CD14-positive monocyte (primary cell): ENCODE measurements at regions of chr6 and their contacts with region 1.

Region 1: GRCh38 chr6:144215932-144216667 is 65.8 kb downstream of the STX11 start:
- DNase-seq: peak; percentile 92 to 94 (median 94)
- H3K4me3 ChIP-seq: peak overlapping the region; percentile 63 to 97 (median 70)
- H3K4me3 Mint-ChIP-seq: peak overlapping the region; percentile 91 to 92
- H3K27ac ChIP-seq: peak overlapping the region; percentile 77 to 93
- H3K27ac Mint-ChIP-seq: peak overlapping the region; percentile 94 to 97 (median 97)
- H3K4me1 ChIP-seq: peaks cover 24 to 30% of the 10 kb centered on the region in 2 donors
- H3K4me1 Mint-ChIP-seq: peaks cover 26% of the 10 kb centered on the region
- H3K27me3 ChIP-seq: no peaks in the 10 kb centered on the region
- H3K27me3 Mint-ChIP-seq: peaks cover 0 to 3% (median 1%) of the 10 kb centered on the region in 3 donors
- CTCF ChIP-seq: peak; percentile 45

Region 2: DNA sequence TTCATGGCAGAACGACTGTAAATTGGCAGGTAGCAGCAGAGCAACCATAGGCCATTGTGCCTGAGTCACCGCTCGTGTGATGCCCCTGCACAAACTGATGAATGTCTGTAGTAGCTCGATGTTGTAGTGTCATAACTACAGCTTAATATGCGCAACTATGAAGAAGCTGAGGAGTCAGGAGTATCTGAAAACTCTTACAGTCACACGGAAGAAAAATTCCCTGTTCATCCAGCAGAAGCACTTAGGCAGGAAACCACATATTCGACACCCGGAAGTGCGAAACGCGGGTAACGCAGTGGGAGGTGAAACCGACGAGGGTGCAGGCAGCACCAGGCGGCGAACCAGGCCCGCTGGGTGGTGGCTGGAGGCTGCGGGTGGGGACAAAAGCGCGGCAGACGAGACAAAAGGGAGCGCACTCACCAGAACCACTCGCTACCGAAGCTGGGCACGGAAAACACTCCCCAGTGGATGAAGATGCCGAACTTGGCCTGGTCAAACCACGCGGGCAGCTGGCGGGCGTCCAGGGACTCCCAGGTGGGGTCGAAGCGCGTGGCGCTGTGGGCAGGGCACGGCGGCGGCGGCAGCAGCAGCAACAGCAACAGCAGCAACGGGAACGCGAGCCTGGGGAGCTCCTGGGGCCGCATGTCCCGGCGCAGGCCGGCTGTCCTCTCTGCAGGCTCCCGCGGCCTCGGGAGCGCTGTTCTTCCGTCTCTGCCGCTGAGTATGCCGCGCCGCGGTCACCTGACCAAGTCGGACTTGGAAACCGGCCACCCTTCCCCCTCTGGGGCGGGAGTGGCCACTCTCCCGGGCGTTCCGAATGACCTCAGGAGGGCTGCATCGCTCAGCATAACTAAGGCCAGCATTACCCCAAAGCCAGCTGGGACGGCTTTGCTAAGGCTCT is 704.9 kb before region 1 on chr6 and contains the start of gene FUCA2:
- intact Hi-C with region 1: no loop called
- DNase-seq: peak; percentile 68 to 85 (median 69)
- H3K4me3 ChIP-seq: peak within 1 kb of the TSS; percentile 73 to 90 (median 74)
- H3K4me3 Mint-ChIP-seq: peak within 1 kb of the TSS; percentile 87 to 95
- H3K27ac ChIP-seq: peak within 1 kb of the TSS; percentile 80 to 93
- H3K27ac Mint-ChIP-seq: peak within 1 kb of the TSS; percentile 82 to 91 (median 86)
- H3K4me1 ChIP-seq: peaks cover 21 to 30% of the 10 kb centered on the region in 2 donors
- H3K4me1 Mint-ChIP-seq: peaks cover 39% of the 10 kb centered on the region
- H3K27me3 ChIP-seq: no peaks in the 10 kb centered on the region
- H3K27me3 Mint-ChIP-seq: peaks cover 0 to 2% (median 0%) of the 10 kb centered on the region in 3 donors
- CTCF ChIP-seq: no peak
- polyA plus RNA-seq, gene FUCA2: 35.7 to 93.5 (median 83.7) TPM

Region 3: DNA sequence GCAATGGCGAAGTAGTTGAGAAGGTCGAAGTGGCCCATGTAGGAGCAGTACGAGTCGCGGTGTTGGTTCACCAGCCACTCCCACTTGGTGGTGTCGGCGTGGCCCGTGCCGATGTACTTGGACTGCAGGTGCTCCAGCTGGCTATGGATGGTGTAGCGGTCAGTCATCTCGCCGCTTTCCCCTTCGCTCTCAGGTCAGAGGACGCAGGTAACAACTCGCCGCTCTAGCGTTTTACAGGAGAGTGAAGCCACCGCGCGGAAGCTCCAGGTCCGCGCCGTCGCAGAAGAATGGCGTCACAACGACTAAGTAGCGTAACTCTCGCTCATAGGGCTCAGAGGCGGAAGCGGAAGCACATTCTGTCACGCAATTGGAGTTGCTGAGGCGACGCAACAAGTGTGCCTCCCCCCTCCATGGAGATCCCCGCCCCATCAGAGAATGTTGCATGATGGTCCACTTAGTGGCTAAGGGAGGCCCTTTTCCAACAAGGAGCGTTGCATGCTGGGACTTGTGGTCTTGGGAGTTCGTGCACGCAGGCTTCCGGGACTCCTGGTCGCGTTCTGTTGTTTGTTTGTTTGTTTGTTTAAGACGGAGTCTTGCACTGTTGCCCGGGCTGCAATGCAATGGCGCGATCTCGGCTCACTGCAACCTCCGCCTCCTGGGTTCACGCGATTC is 120.6 kb before region 1 on chr6 and contains the start of gene SF3B5:
- intact Hi-C with region 1: loop called in 1 of 2 experiments (anchors 5 kb)
- DNase-seq: peak; percentile 100
- H3K4me3 ChIP-seq: peak within 1 kb of the TSS; percentile 73 to 84 (median 82)
- H3K4me3 Mint-ChIP-seq: peak within 1 kb of the TSS; percentile 95 to 97
- H3K27ac ChIP-seq: peak within 1 kb of the TSS; percentile 87 to 94
- H3K27ac Mint-ChIP-seq: peak within 1 kb of the TSS; percentile 96 to 99 (median 97)
- H3K4me1 ChIP-seq: peaks cover 17 to 24% of the 10 kb centered on the region in 2 donors
- H3K4me1 Mint-ChIP-seq: peaks cover 21% of the 10 kb centered on the region
- H3K27me3 ChIP-seq: no peaks in the 10 kb centered on the region
- H3K27me3 Mint-ChIP-seq: peaks cover 0 to 2% (median 2%) of the 10 kb centered on the region in 3 donors
- CTCF ChIP-seq: no peak
- polyA plus RNA-seq, gene SF3B5: 271 to 445 (median 355) TPM

Region 4: GRCh38 chr6:144104898-144105487 is 111.1 kb before region 1 on chr6:
- intact Hi-C with region 1: loop called in 1 of 2 experiments (anchors 5 kb)
- DNase-seq: peak; percentile 65 to 77 (median 71)
- H3K4me3 ChIP-seq: no peak overlapping the region
- H3K4me3 Mint-ChIP-seq: no peak overlapping the region
- H3K27ac ChIP-seq: no peak overlapping the region
- H3K27ac Mint-ChIP-seq: no peak overlapping the region
- H3K4me1 ChIP-seq: no peaks in the 10 kb centered on the region
- H3K4me1 Mint-ChIP-seq: peaks cover 3% of the 10 kb centered on the region
- H3K27me3 ChIP-seq: no peaks in the 10 kb centered on the region
- H3K27me3 Mint-ChIP-seq: peaks cover 0 to 2% (median 0%) of the 10 kb centered on the region in 3 donors
- CTCF ChIP-seq: peak; percentile 72

Region 5: DNA sequence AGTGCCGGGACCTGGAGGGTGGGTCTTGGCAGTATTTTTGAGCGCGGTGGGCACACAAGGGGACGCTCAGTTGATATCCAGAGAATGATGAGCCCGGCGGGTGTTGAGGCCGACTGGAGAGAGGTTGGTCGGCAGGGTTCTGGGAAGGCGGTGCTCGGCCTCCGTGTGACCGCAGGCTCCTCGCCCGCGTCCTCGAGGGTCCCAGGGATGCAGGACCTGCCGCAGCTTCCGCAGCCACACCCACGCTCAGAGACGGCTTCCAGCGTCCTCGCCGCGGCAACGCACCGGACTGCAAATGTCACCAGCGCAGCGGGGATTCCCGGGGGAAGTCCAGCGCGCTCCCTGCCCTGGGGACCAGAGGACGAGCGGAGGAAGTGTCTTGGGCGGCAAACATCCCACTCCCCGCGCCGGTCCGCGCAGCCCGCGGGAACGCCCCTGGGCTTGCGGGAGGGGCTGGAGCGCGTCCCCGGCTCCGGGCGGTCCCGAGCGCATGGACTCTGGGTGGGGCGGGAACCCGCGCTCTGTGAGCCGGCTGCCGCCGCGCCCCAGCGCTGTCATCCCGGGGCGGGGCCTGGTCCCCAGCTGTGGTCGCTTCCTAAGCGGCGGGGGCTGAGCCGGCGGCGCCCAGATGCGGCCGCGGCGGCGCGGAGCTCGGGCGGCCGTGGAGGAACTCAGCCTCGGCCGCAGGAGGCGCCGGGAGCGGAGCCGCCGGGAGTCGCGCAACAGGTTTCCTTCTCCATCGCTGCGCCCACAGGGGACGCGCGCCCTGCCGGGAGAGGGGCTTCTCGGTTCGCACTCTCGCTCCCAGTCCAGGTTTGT is 66.0 kb before region 1 on chr6 and contains the start of gene STX11:
- intact Hi-C with region 1: loop called (anchors 5 kb)
- DNase-seq: peak; percentile 91 to 99 (median 95)
- H3K4me3 ChIP-seq: peak within 1 kb of the TSS; percentile 88 to 99 (median 90)
- H3K4me3 Mint-ChIP-seq: peak within 1 kb of the TSS; percentile 95 to 97
- H3K27ac ChIP-seq: peak within 1 kb of the TSS; percentile 96 to 99
- H3K27ac Mint-ChIP-seq: peak within 1 kb of the TSS; percentile 99 to 100 (median 99)
- H3K4me1 ChIP-seq: peaks cover 43 to 44% of the 10 kb centered on the region in 2 donors
- H3K4me1 Mint-ChIP-seq: peaks cover 47% of the 10 kb centered on the region
- H3K27me3 ChIP-seq: no peaks in the 10 kb centered on the region
- H3K27me3 Mint-ChIP-seq: peaks cover 0 to 3% (median 1%) of the 10 kb centered on the region in 3 donors
- CTCF ChIP-seq: no peak
- polyA plus RNA-seq, gene STX11: 276 to 372 (median 367) TPM

Region 6: GRCh38 chr6:144158133-144158532 is 58.0 kb before region 1 on chr6:
- intact Hi-C with region 1: loop called (anchors 5 kb)
- DNase-seq: no peak
- H3K4me3 ChIP-seq: peak overlapping the region in 1 of 3 experiments; percentile 90
- H3K4me3 Mint-ChIP-seq: peak overlapping the region; percentile 56 to 67
- H3K27ac ChIP-seq: peak overlapping the region; percentile 23 to 96
- H3K27ac Mint-ChIP-seq: peak overlapping the region; percentile 75 to 99 (median 97)
- H3K4me1 ChIP-seq: peaks cover 98 to 100% of the 10 kb centered on the region in 2 donors
- H3K4me1 Mint-ChIP-seq: peaks cover 97% of the 10 kb centered on the region
- H3K27me3 ChIP-seq: no peaks in the 10 kb centered on the region
- H3K27me3 Mint-ChIP-seq: no peaks in the 10 kb centered on the region
- CTCF ChIP-seq: no peak

Region 7: GRCh38 chr6:144171406-144171805 is 44.7 kb before region 1 on chr6:
- intact Hi-C with region 1: loop called in 1 of 2 experiments (anchors 5 kb)
- DNase-seq: no peak
- H3K4me3 ChIP-seq: no peak overlapping the region
- H3K4me3 Mint-ChIP-seq: no peak overlapping the region
- H3K27ac ChIP-seq: no peak overlapping the region
- H3K27ac Mint-ChIP-seq: no peak overlapping the region
- H3K4me1 ChIP-seq: peaks cover 39 to 67% of the 10 kb centered on the region in 2 donors
- H3K4me1 Mint-ChIP-seq: peaks cover 66% of the 10 kb centered on the region
- H3K27me3 ChIP-seq: no peaks in the 10 kb centered on the region
- H3K27me3 Mint-ChIP-seq: peaks cover 0 to under 1% (median 0%) of the 10 kb centered on the region in 3 donors
- CTCF ChIP-seq: no peak

Region 8: DNA sequence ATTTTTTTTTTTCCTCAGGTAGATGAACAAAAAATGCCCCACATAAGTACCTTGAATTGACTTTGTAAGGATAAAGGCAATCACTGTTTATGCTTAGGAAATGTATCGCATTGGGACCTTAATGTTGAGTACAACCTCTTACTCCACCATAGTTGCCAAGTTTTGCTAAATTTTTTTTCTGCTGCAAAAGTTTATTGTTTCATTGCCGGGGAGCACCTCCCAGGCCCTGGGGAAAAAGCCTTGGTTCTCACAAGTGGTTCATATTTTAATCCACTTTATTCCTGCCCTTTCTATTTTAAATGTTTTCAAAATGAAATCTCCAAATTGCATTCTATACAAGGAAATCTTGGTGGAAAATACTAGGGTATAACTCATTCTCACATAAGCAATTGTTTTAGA is 16.7 kb after region 1 on chr6:
- intact Hi-C with region 1: no loop called
- DNase-seq: no peak
- H3K4me3 ChIP-seq: no peak overlapping the region
- H3K4me3 Mint-ChIP-seq: no peak overlapping the region
- H3K27ac ChIP-seq: no peak overlapping the region
- H3K27ac Mint-ChIP-seq: no peak overlapping the region
- H3K4me1 ChIP-seq: no peaks in the 10 kb centered on the region
- H3K4me1 Mint-ChIP-seq: no peaks in the 10 kb centered on the region
- H3K27me3 ChIP-seq: no peaks in the 10 kb centered on the region
- H3K27me3 Mint-ChIP-seq: peaks cover 0 to 1% (median 0%) of the 10 kb centered on the region in 3 donors
- CTCF ChIP-seq: no peak

Region 9: DNA sequence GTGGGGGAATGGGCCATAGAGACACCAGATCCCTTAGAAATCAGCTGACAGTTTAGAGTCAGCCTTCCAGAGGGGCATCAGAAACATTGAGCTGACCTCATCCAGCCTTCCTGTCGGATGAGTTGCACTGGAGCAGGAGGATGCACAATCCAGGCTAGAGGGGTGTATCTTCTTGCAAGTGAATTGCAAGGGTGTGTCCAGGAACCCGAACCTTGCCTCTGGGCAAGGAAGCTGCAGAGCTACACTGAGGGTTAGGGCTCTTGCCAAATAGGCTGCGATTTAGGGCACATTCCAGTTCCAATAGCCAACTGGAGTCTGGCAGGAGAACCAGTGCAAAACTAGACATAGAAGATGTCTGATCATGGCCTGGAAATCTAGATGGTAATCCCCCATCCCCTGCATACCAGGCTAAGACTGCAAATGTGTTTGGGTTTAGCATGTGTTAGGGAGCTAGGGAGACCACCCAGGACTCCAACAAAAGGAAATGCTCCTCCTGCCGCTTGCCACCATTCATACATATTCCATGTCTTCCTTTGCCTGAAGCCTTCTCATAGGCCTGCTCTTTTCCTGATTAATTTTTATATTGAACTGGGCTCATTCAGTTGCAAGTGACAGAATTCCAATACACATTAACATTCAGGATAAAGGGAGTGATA is 62.7 kb after region 1 on chr6:
- intact Hi-C with region 1: loop called in 1 of 2 experiments (anchors 10 kb)
- DNase-seq: no peak
- H3K4me3 ChIP-seq: no peak overlapping the region
- H3K4me3 Mint-ChIP-seq: no peak overlapping the region
- H3K27ac ChIP-seq: no peak overlapping the region
- H3K27ac Mint-ChIP-seq: no peak overlapping the region
- H3K4me1 ChIP-seq: peaks cover 3 to 6% of the 10 kb centered on the region in 2 donors
- H3K4me1 Mint-ChIP-seq: peaks cover 4% of the 10 kb centered on the region
- H3K27me3 ChIP-seq: no peaks in the 10 kb centered on the region
- H3K27me3 Mint-ChIP-seq: peaks cover 0 to 3% (median 2%) of the 10 kb centered on the region in 3 donors
- CTCF ChIP-seq: no peak